A673 (cell line): ENCODE measurements at regions of chr7 and their contacts with region 1.

Region 1: GRCh38 chr7:35624299-35625186 is 70.4 kb downstream of the HERPUD2 start:
- DNase-seq: peak; percentile 84
- H3K4me3 ChIP-seq: no peak overlapping the region
- H3K27ac ChIP-seq: no peak overlapping the region
- H3K4me1 ChIP-seq: peaks cover 7% of the 10 kb centered on the region
- H3K27me3 ChIP-seq: no peaks in the 10 kb centered on the region
- CTCF ChIP-seq: peak; percentile 94

Region 2: GRCh38 chr7:35037526-35038339 is 586.8 kb before region 1 on chr7:
- CTCF ChIA-PET with region 1: no interaction called
- POLR2A ChIA-PET with region 1: no interaction called
- intact Hi-C with region 1: no loop called
- DNase-seq: peak; percentile 95
- H3K4me3 ChIP-seq: peak overlapping the region; percentile 78
- H3K27ac ChIP-seq: peak overlapping the region; percentile 73
- H3K4me1 ChIP-seq: peaks cover 17% of the 10 kb centered on the region
- H3K27me3 ChIP-seq: no peaks in the 10 kb centered on the region
- CTCF ChIP-seq: peak; percentile 92

Region 3: GRCh38 chr7:35185907-35186731 is 438.4 kb before region 1 on chr7:
- CTCF ChIA-PET with region 1: no interaction called
- POLR2A ChIA-PET with region 1: no interaction called
- intact Hi-C with region 1: loop called (anchors 2 kb)
- DNase-seq: peak; percentile 63
- H3K4me3 ChIP-seq: peak overlapping the region; percentile 48
- H3K27ac ChIP-seq: no peak overlapping the region
- H3K4me1 ChIP-seq: no peaks in the 10 kb centered on the region
- H3K27me3 ChIP-seq: peaks cover 24% of the 10 kb centered on the region
- CTCF ChIP-seq: no peak

Region 4: DNA sequence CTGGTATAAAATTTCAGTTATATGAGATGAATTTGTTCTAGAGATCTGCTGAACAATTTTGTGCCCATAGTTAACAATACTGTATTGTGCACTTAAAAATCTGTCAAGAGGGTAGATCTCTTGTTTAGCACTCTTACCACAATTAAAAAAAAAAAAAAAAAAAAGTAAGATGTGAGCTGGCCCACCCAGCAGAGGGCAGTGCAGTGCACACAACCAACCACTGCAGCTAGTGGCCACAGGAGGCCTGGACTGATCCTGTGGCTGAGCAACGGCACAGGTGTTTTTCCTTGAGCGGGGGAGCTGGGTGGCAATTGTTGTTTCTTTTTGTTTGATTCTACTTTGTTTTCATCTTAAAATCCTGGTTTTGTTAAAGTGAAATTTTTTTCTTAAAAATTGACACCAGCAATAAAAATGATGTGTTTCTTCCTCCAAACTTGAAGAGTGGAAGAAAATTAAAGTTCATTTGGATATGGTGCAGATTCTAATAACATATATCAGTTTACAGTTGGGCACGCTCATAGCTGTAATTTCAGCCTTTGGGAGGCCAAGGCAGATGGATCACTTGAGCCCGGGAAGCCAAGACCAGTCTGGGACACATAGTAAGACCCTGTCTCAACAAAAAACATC is 199.6 kb before region 1 on chr7:
- CTCF ChIA-PET with region 1: interaction called, 14 read pairs
- POLR2A ChIA-PET with region 1: no interaction called
- intact Hi-C with region 1: loop called (anchors 2 kb)
- DNase-seq: peak; percentile 67
- H3K4me3 ChIP-seq: no peak overlapping the region
- H3K27ac ChIP-seq: no peak overlapping the region
- H3K4me1 ChIP-seq: no peaks in the 10 kb centered on the region
- H3K27me3 ChIP-seq: no peaks in the 10 kb centered on the region
- CTCF ChIP-seq: peak; percentile 90

Region 5: DNA sequence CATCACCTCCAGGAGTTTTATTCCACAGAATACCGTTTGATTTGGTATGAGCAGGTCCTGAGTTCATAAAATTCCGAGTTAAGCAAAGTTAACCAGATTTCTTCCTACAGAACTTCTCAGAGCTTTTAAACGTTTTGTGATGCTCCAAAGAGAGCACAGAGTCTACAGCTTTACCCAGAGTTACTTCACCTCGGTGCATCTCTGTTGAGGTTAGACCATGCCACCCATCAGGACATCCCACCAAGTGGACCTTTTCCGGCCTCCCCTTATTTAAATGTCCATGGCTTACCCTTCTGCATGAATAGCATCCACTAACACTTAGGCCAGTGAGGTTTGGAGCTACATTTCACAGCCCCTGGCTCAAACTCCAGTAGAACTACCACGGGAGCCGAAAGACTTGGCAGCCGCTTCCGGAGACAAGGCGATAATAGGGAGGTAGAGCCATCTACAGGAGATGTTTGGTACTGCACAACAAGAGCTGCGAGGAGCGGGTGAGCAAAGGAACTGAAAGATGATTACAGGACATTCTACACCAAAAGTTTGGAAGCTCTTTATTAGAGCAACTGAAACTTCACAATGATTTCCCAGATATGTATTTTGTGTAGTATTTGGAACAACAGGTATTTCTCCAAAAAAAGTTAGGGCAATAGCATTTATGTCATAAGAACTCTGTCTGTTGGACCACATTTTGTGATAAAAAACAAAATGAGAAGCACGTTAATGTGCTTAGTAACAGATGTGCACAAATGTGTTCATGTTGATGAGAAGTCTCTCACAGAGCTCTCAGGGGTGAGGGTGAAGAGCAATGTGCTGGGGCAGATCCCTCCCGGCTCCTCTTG is 104.4 kb before region 1 on chr7:
- CTCF ChIA-PET with region 1: no interaction called
- POLR2A ChIA-PET with region 1: no interaction called
- intact Hi-C with region 1: loop called (anchors 5 kb)
- DNase-seq: peak; percentile 87
- H3K4me3 ChIP-seq: no peak overlapping the region
- H3K27ac ChIP-seq: no peak overlapping the region
- H3K4me1 ChIP-seq: peaks cover 10% of the 10 kb centered on the region
- H3K27me3 ChIP-seq: no peaks in the 10 kb centered on the region
- CTCF ChIP-seq: peak; percentile 91

Region 6: GRCh38 chr7:35537067-35538023 is 87.2 kb before region 1 on chr7:
- CTCF ChIA-PET with region 1: no interaction called
- POLR2A ChIA-PET with region 1: no interaction called
- intact Hi-C with region 1: loop called (anchors 5 kb)
- DNase-seq: peak; percentile 85
- H3K4me3 ChIP-seq: peak overlapping the region; percentile 44
- H3K27ac ChIP-seq: no peak overlapping the region
- H3K4me1 ChIP-seq: peaks cover 4% of the 10 kb centered on the region
- H3K27me3 ChIP-seq: no peaks in the 10 kb centered on the region
- CTCF ChIP-seq: peak; percentile 98

Region 7: GRCh38 chr7:35555934-35556333 is 68.6 kb before region 1 on chr7:
- CTCF ChIA-PET with region 1: no interaction called
- POLR2A ChIA-PET with region 1: no interaction called
- intact Hi-C with region 1: loop called (anchors 5 kb)
- DNase-seq: no peak
- H3K4me3 ChIP-seq: no peak overlapping the region
- H3K27ac ChIP-seq: no peak overlapping the region
- H3K4me1 ChIP-seq: peaks cover 18% of the 10 kb centered on the region
- H3K27me3 ChIP-seq: no peaks in the 10 kb centered on the region
- CTCF ChIP-seq: no peak

Region 8: DNA sequence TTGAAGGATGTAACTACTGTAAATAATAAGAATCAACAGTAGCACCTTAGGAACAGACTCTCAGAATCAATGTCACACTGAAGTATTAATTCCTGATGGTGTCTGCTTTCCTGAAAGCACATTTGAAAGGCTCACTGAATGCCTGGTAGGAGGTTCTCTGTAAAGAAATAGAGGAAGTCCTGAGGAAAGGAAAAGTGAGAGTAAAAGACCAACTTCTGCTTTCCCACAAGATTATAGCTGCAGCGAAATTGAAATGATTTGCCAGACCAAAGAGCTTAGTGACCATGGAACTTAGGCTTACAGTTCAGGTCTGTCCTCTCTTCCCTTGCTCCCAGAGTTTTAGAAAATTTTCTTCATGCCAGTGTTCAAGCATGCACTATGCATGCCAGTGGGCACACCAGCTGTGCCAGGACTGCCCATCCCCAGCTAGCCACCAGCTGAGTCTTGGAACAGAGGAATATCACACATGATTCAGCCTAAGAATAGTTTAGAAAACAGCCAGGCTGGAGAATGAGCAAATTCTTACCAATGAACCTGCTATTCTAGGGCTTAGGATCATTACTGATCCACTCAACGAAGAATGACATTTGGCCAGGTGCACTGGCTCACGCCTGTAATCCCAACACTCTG is 52.8 kb before region 1 on chr7:
- CTCF ChIA-PET with region 1: no interaction called
- POLR2A ChIA-PET with region 1: no interaction called
- intact Hi-C with region 1: no loop called
- DNase-seq: no peak
- H3K4me3 ChIP-seq: no peak overlapping the region
- H3K27ac ChIP-seq: no peak overlapping the region
- H3K4me1 ChIP-seq: peaks cover 21% of the 10 kb centered on the region
- H3K27me3 ChIP-seq: no peaks in the 10 kb centered on the region
- CTCF ChIP-seq: no peak

Region 9: GRCh38 chr7:35906191-35906908 is 281.8 kb after region 1 on chr7:
- CTCF ChIA-PET with region 1: interaction called, 3 read pairs
- POLR2A ChIA-PET with region 1: no interaction called
- intact Hi-C with region 1: loop called (anchors 5 kb)
- DNase-seq: peak; percentile 87
- H3K4me3 ChIP-seq: no peak overlapping the region
- H3K27ac ChIP-seq: no peak overlapping the region
- H3K4me1 ChIP-seq: peaks cover 32% of the 10 kb centered on the region
- H3K27me3 ChIP-seq: no peaks in the 10 kb centered on the region
- CTCF ChIP-seq: peak; percentile 85